ENCODE measurements at regions of chr14 and their contacts with region 1.

Region 1: GRCh38 chr14:99884834-99885648 is 91.8 kb downstream of the EML1 start:
- DNase-seq: peak in 2 of 7 donors; percentile 43 to 44
- H3K4me3 ChIP-seq: no peak overlapping the region
- H3K27ac ChIP-seq: no peak overlapping the region
- H3K4me1 ChIP-seq: no peaks in the 10 kb centered on the region
- H3K27me3 ChIP-seq: no peaks in the 10 kb centered on the region
- CTCF ChIP-seq: peak; percentile 51 to 85 (median 81)
- POLR2A ChIP-seq: no peak

Region 2: DNA sequence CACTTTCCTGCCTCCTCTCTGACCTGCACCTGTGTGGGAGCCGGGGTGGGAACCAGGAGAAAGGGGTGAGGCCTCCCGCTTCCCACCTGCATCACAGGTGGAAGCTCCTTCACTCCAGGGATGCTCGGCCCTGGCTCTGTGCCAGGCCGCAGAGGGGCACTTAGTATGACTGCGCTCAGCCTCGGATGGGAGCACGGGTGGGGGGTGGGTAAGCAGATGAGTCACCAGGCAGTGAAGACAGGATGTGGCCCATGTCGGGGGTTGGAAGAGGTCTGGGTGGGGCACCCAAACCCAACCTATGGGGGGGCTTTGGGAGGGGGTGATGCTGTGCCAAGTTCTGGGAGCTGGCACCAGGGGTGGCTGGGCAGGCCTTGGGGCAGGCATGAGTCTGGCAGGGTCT is 208.4 kb before region 1 on chr14:
- intact Hi-C with region 1: loop called (anchors 5 kb)
- DNase-seq: no peak
- H3K4me3 ChIP-seq: no peak overlapping the region
- H3K27ac ChIP-seq: no peak overlapping the region
- H3K4me1 ChIP-seq: no peaks in the 10 kb centered on the region
- H3K27me3 ChIP-seq: no peaks in the 10 kb centered on the region
- CTCF ChIP-seq: no peak
- POLR2A ChIP-seq: no peak

Region 3: DNA sequence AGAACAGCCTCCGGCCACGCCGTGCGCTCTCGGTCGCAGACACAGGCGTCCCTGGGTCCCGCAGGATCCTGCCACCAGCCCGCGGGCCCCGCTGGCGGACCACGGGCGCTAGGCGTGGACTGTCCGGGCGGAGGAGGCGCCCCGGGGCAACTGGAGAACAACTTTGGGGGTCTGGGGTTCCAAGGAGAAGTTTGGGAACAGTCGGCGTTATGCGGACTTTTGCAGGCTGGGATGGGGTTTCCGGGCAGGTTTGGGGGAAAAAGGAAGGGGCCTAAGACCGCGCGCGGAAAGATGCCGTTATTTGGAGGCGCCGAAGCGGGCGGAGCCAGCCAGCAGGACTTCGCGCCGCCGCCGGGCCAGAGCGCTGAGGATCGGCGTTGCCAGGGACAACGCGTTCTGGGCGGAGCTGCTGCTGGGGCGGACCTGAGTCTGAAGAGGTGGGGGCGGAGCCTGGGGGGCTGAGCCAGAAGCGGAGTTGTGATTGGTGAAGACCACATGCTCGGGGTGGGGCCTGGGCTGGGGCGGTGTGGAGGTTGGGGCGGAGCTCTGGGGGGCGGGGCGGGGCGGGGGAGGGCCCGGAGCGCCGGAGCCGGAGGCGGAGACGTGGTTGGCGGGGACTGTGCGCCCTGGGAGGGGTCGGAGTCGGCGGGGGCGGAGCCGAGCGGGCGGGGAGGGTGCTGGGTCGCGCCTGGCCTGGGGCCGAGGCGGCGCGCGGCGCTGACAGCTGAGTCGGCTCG is 201.3 kb before region 1 on chr14 and contains the start of gene CYP46A1:
- intact Hi-C with region 1: loop called (anchors 5 kb)
- DNase-seq: peak; percentile 100
- H3K4me3 ChIP-seq: peak within 1 kb of the TSS; percentile 77 to 94 (median 88)
- H3K27ac ChIP-seq: peak within 1 kb of the TSS in 4 of 5 donors; percentile 78 to 91 (median 86)
- H3K4me1 ChIP-seq: peaks cover 9 to 12% of the 10 kb centered on the region in 2 donors
- H3K27me3 ChIP-seq: no peaks in the 10 kb centered on the region
- CTCF ChIP-seq: peak in 1 of 6 experiments; percentile 19
- POLR2A ChIP-seq: no peak
- total RNA-seq, gene CYP46A1: 0.67 to 3.2 (median 2.1) TPM

Region 4: GRCh38 chr14:99729991-99730868 is 154.8 kb before region 1 on chr14:
- intact Hi-C with region 1: loop called (anchors 2 to 5 kb)
- DNase-seq: peak in 6 of 7 donors; percentile 70 to 82 (median 78)
- H3K4me3 ChIP-seq: peak overlapping the region in 1 of 4 donors; percentile 75
- H3K27ac ChIP-seq: peak overlapping the region in 1 of 5 donors; percentile 63
- H3K4me1 ChIP-seq: peaks cover 22 to 30% of the 10 kb centered on the region in 2 donors
- H3K27me3 ChIP-seq: peaks cover 7% of the 10 kb centered on the region
- CTCF ChIP-seq: peak; percentile 40 to 96 (median 76)
- POLR2A ChIP-seq: no peak

Region 5: DNA sequence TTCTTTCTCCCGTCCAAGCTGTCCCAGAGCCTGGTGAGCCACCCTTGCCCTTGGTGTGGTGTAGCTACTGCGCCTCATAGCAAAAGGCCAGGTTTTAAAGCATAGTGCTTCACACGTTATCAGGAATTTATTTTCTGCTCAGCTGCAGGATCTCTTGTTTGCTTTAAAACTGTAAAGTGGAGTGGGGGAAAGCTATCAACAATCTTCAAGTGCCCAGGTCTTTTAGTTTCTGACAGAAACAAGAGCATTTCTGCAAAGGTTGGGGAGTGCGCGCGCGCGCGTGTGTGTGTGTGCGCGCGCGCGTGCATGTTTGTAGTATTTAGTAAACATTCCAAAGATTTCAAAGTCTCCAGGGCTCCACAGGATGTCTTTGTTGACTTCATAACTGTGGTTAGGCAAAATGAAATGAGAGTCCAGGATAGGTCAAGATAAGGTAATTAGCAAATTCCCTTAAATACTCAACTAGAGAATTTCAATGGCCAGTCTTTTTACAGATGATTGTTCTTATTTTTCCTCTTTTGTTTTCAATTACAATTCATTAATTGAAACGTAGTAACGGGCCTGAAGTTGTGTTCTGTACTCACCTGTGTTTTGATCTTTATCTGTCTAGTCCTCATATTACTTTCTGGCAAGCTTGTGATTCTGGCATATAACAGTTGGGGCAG is 46.3 kb before region 1 on chr14:
- intact Hi-C with region 1: no loop called
- DNase-seq: no peak
- H3K4me3 ChIP-seq: no peak overlapping the region
- H3K27ac ChIP-seq: no peak overlapping the region
- H3K4me1 ChIP-seq: peaks cover 0 to 10% of the 10 kb centered on the region in 2 donors
- H3K27me3 ChIP-seq: no peaks in the 10 kb centered on the region
- CTCF ChIP-seq: no peak
- POLR2A ChIP-seq: no peak

Measured in adrenal gland (tissue), 19 donors.